ENCODE measurements at regions of chr6 and their contacts with region 1.

Region 1: GRCh38 chr6:100664274-100665040 is 199.7 kb upstream of the SIM1 start:
- DNase-seq: no peak
- ATAC-seq: peak; percentile 65
- H3K4me3 ChIP-seq: no peak overlapping the region
- H3K27ac ChIP-seq: peak overlapping the region; percentile 26; the same call in 1 of the 2 replicates
- H3K4me1 ChIP-seq: peaks cover 11% of the 10 kb centered on the region
- H3K27me3 ChIP-seq: no peaks in the 10 kb centered on the region
- CTCF ChIP-seq: peak; percentile 48 to 62 (median 50); a peak in 5 of 6 replicates
- EP300 ChIP-seq: no peak
- POLR2A ChIP-seq: no peak
- RAD21 ChIP-seq: peak; percentile 48

Region 2: GRCh38 chr6:100105138-100105753 is 559.2 kb before region 1 on chr6:
- CTCF ChIA-PET with region 1: interaction called, 19 read pairs
- POLR2A ChIA-PET with region 1: no interaction called
- RAD21 ChIA-PET with region 1: interaction called, 6 read pairs
- SMC1A ChIA-PET with region 1: interaction called, 6 read pairs
- in situ Hi-C with region 1: loop called (anchors 10 kb)
- intact Hi-C with region 1: no loop called
- DNase-seq: no peak
- ATAC-seq: peak; percentile 61
- H3K4me3 ChIP-seq: no peak overlapping the region
- H3K27ac ChIP-seq: no peak overlapping the region
- H3K4me1 ChIP-seq: no peaks in the 10 kb centered on the region
- H3K27me3 ChIP-seq: no peaks in the 10 kb centered on the region; a peak in 1 of 4 replicates
- CTCF ChIP-seq: no peak
- EP300 ChIP-seq: peak in 1 of 2 experiments; percentile 23; a peak in 1 of 4 replicates
- POLR2A ChIP-seq: no peak
- RAD21 ChIP-seq: no peak

Region 3: GRCh38 chr6:100472674-100473073 is 191.8 kb before region 1 on chr6:
- CTCF ChIA-PET with region 1: interaction called, 13 read pairs
- POLR2A ChIA-PET with region 1: no interaction called
- RAD21 ChIA-PET with region 1: no interaction called
- SMC1A ChIA-PET with region 1: interaction called, 3 read pairs
- in situ Hi-C with region 1: no loop called
- intact Hi-C with region 1: loop called (anchors 5 kb)
- DNase-seq: peak; percentile 42
- ATAC-seq: peak; percentile 86
- H3K4me3 ChIP-seq: no peak overlapping the region
- H3K27ac ChIP-seq: no peak overlapping the region
- H3K4me1 ChIP-seq: peaks cover 16% of the 10 kb centered on the region
- H3K27me3 ChIP-seq: peaks cover 2 to 9% of the 10 kb centered on the region in 2 experiments; a peak in 3 of 4 replicates
- CTCF ChIP-seq: no peak
- EP300 ChIP-seq: peak in 1 of 2 experiments; percentile 77; a peak in 2 of 4 replicates
- POLR2A ChIP-seq: no peak
- RAD21 ChIP-seq: no peak

Region 4: GRCh38 chr6:100626721-100627120 is 37.7 kb before region 1 on chr6:
- CTCF ChIA-PET with region 1: interaction called, 11 read pairs
- POLR2A ChIA-PET with region 1: no interaction called
- RAD21 ChIA-PET with region 1: no interaction called
- SMC1A ChIA-PET with region 1: no interaction called
- in situ Hi-C with region 1: no loop called
- intact Hi-C with region 1: no loop called
- DNase-seq: no peak
- ATAC-seq: no peak
- H3K4me3 ChIP-seq: no peak overlapping the region
- H3K27ac ChIP-seq: no peak overlapping the region
- H3K4me1 ChIP-seq: no peaks in the 10 kb centered on the region
- H3K27me3 ChIP-seq: no peaks in the 10 kb centered on the region
- CTCF ChIP-seq: no peak
- EP300 ChIP-seq: no peak
- POLR2A ChIP-seq: no peak
- RAD21 ChIP-seq: no peak

Region 5: DNA sequence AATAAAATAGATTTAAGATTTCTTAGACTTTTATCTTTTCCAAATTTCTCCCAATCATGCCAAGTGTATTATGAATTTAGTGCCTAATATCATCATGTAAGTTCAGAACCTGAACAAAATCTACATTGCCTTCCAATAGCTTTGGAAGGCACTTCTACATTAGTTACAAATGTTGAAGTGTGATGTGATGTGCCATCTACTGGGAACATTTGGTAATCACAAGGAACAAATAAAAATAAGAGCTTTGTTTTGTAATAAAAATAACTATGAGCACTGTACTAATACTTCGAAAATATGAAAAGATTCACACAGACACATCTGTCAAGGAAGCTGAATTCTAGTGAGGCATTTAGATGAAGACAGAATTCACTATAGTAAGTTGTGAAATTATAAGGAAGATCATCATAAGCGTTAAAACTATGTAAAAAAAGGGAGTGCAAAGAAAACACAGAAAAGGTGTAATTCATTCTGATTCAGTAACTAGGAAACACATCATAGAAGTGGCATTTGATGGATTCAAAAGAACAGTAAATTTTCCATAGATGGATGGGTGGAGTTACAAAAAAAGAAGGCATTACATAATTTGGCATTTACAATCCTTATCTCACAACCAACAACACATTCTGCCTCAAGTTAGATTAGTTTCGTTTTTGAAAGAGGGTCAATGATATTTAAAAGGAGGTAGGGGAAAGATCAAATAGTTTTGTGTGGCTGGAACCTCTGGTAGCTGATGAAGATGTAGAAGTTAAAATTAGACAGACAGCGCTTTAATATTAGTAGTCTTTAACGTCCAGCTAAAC is 55.6 kb after region 1 on chr6:
- CTCF ChIA-PET with region 1: interaction called, 14 read pairs
- POLR2A ChIA-PET with region 1: no interaction called
- RAD21 ChIA-PET with region 1: interaction called, 7 read pairs
- SMC1A ChIA-PET with region 1: interaction called, 7 read pairs
- in situ Hi-C with region 1: no loop called
- intact Hi-C with region 1: no loop called
- DNase-seq: no peak
- ATAC-seq: peak; percentile 65
- H3K4me3 ChIP-seq: no peak overlapping the region
- H3K27ac ChIP-seq: no peak overlapping the region
- H3K4me1 ChIP-seq: no peaks in the 10 kb centered on the region
- H3K27me3 ChIP-seq: no peaks in the 10 kb centered on the region
- CTCF ChIP-seq: peak; percentile 43 to 48 (median 46); a peak in 4 of 6 replicates
- EP300 ChIP-seq: no peak
- POLR2A ChIP-seq: no peak
- RAD21 ChIP-seq: peak; percentile 34; the same call in 1 of the 2 replicates

Region 6: DNA sequence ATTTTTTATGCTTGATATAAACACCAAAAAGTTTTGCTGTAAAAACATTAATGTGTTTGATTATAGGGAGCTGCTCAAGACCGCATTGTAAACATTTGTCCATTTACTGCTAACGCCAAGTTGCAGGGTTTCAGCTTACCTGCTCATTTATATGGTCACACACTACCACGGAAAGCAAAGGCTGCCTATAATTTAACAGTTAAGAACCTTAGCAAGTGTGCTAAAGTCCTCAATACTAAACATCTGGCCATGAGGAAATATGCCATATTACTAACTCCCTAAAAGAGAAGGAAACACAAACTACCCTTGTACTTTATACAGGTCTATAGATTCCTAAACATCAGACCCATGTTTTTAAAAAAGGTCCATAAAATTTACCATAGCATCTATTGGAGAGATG is 87.1 kb after region 1 on chr6:
- CTCF ChIA-PET with region 1: no interaction called
- POLR2A ChIA-PET with region 1: no interaction called
- RAD21 ChIA-PET with region 1: no interaction called
- SMC1A ChIA-PET with region 1: no interaction called
- in situ Hi-C with region 1: no loop called
- intact Hi-C with region 1: no loop called
- DNase-seq: no peak
- ATAC-seq: no peak
- H3K4me3 ChIP-seq: no peak overlapping the region
- H3K27ac ChIP-seq: no peak overlapping the region
- H3K4me1 ChIP-seq: no peaks in the 10 kb centered on the region
- H3K27me3 ChIP-seq: no peaks in the 10 kb centered on the region
- CTCF ChIP-seq: no peak
- EP300 ChIP-seq: no peak
- POLR2A ChIP-seq: no peak
- RAD21 ChIP-seq: no peak

Region 7: GRCh38 chr6:101614774-101615173 is 950.3 kb after region 1 on chr6:
- CTCF ChIA-PET with region 1: no interaction called
- POLR2A ChIA-PET with region 1: no interaction called
- RAD21 ChIA-PET with region 1: no interaction called
- SMC1A ChIA-PET with region 1: no interaction called
- in situ Hi-C with region 1: no loop called
- intact Hi-C with region 1: no loop called
- DNase-seq: no peak
- ATAC-seq: peak; percentile 51
- H3K4me3 ChIP-seq: no peak overlapping the region
- H3K27ac ChIP-seq: no peak overlapping the region
- H3K4me1 ChIP-seq: no peaks in the 10 kb centered on the region
- H3K27me3 ChIP-seq: no peaks in the 10 kb centered on the region
- CTCF ChIP-seq: no peak
- EP300 ChIP-seq: no peak
- POLR2A ChIP-seq: no peak
- RAD21 ChIP-seq: no peak